ENCODE measurements at regions of chr16 and their contacts with region 1.

Region 1: DNA sequence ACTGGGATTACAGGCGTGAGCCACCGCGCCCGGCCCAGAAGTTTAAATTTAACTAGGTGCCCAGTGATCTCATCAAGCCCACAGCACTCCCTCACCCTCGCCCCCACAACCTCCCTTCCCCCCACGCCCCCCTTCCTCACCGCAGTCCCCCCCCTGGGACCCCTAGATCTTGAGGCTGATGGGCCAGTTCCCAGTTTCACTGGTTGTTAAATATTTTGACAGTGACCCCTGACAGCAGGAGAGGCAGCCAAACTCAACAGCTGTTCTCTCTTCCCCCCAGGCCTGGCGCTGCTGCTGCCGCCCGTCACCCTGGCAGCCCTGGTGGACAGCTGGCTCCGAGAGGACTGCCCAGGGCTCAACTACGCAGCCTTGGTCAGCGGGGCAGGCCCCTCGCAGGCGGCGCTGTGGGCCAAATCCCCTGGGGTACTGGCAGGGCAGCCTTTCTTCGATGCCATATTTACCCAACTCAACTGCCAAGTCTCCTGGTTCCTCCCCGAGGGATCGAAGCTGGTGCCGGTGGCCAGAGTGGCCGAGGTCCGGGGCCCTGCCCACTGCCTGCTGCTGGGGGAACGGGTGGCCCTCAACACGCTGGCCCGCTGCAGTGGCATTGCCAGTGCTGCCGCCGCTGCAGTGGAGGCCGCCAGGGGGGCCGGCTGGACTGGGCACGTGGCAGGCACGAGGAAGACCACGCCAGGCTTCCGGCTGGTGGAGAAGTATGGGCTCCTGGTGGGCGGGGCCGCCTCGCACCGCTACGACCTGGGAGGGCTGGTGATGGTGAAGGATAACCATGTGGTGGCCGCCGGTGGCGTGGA is 15.6 kb downstream of the QPRT start:
- DNase-seq: no peak
- ATAC-seq: no peak
- H3K4me3 ChIP-seq: no peak overlapping the region
- H3K4me3 Mint-ChIP-seq: no peak overlapping the region
- H3K27ac ChIP-seq: no peak overlapping the region
- H3K27ac Mint-ChIP-seq: no peak overlapping the region
- H3K4me1 ChIP-seq: peaks cover 0 to 9% of the 10 kb centered on the region in 2 donors
- H3K4me1 Mint-ChIP-seq: peaks cover 11% of the 10 kb centered on the region
- H3K27me3 ChIP-seq: no peaks in the 10 kb centered on the region
- H3K27me3 Mint-ChIP-seq: no peaks in the 10 kb centered on the region
- CTCF ChIP-seq: no peak

Region 2: GRCh38 chr16:28585674-28586073 is 1108.9 kb before region 1 on chr16:
- CTCF ChIA-PET with region 1: no interaction called
- POLR2A ChIA-PET with region 1: no interaction called
- intact Hi-C with region 1: no loop called
- DNase-seq: no peak
- ATAC-seq: no peak
- H3K4me3 ChIP-seq: no peak overlapping the region
- H3K4me3 Mint-ChIP-seq: no peak overlapping the region
- H3K27ac ChIP-seq: no peak overlapping the region
- H3K27ac Mint-ChIP-seq: no peak overlapping the region
- H3K4me1 ChIP-seq: no peaks in the 10 kb centered on the region
- H3K4me1 Mint-ChIP-seq: no peaks in the 10 kb centered on the region
- H3K27me3 ChIP-seq: no peaks in the 10 kb centered on the region
- H3K27me3 Mint-ChIP-seq: no peaks in the 10 kb centered on the region
- CTCF ChIP-seq: no peak

Region 3: GRCh38 chr16:28974437-28975157 is 720.0 kb before region 1 on chr16 and contains the start of gene SPNS1:
- CTCF ChIA-PET with region 1: no interaction called
- POLR2A ChIA-PET with region 1: no interaction called
- intact Hi-C with region 1: no loop called
- DNase-seq: peak; percentile 96
- ATAC-seq: peak; percentile 89
- H3K4me3 ChIP-seq: peak within 1 kb of the TSS; percentile 75 to 95 (median 83)
- H3K4me3 Mint-ChIP-seq: peak within 1 kb of the TSS; percentile 96
- H3K27ac ChIP-seq: peak within 1 kb of the TSS; percentile 65 to 90
- H3K27ac Mint-ChIP-seq: peak within 1 kb of the TSS; percentile 95
- H3K4me1 ChIP-seq: peaks cover 13 to 17% of the 10 kb centered on the region in 2 donors
- H3K4me1 Mint-ChIP-seq: peaks cover 30% of the 10 kb centered on the region
- H3K27me3 ChIP-seq: no peaks in the 10 kb centered on the region
- H3K27me3 Mint-ChIP-seq: no peaks in the 10 kb centered on the region
- CTCF ChIP-seq: no peak
- total RNA-seq, gene SPNS1: 36.4 and 37.8 TPM in 2 replicates

Region 4: DNA sequence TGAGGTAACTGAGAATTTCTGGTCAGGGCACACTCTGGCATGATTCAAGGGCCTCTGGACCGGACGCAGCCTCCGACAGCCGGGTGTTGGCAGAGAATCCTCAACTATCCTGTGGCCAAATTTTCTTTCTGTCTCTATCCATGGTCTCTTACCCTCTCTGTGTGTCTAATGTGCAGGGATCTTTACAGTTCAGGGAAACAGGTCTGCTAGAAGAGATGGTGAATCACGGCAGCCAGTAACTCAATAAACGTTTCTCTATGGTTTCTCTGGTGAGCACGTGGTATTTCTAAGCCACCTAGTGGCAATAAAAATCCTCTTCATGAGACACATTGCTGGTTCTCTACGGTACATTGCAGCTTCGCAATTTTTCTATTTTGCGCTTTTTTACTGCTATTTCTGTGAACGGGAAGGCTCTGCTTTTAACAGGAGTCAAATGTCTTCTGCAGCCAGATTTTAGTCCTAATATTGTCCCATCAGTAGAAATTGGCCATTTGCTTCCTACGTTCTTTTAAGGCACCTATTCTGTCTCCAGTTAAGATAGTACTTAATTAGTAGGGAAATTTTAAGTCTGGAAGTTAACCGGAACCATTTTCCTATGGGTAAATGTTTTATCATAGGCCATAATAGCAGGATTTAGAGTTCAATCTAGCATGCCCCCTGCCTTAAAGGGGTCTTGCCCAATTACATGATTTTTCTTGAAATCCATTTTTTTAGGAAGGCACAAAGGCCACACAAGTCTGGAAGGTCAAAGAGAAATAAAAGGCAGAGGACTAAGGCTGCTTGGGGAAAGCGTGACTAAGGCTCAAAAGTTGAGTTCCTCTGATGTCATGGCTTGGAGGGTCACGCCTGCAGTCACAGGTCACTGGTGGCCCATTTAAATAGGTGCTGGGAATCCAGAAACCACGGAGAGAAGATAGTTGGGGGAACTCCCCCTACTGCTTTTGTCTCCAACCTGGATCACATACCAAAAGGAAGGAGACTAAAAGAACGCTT is 15.9 kb after region 1 on chr16:
- CTCF ChIA-PET with region 1: interaction called, 60 read pairs
- POLR2A ChIA-PET with region 1: no interaction called
- intact Hi-C with region 1: loop called (anchors 1 kb)
- DNase-seq: peak; percentile 77
- ATAC-seq: peak; percentile 88
- H3K4me3 ChIP-seq: peak overlapping the region in 1 of 5 experiments; percentile 29
- H3K4me3 Mint-ChIP-seq: peak overlapping the region; percentile 17
- H3K27ac ChIP-seq: no peak overlapping the region
- H3K27ac Mint-ChIP-seq: no peak overlapping the region
- H3K4me1 ChIP-seq: peaks cover 19 to 21% of the 10 kb centered on the region in 2 donors
- H3K4me1 Mint-ChIP-seq: peaks cover 20% of the 10 kb centered on the region
- H3K27me3 ChIP-seq: no peaks in the 10 kb centered on the region
- H3K27me3 Mint-ChIP-seq: peaks cover 8% of the 10 kb centered on the region
- CTCF ChIP-seq: peak; percentile 76

Region 5: DNA sequence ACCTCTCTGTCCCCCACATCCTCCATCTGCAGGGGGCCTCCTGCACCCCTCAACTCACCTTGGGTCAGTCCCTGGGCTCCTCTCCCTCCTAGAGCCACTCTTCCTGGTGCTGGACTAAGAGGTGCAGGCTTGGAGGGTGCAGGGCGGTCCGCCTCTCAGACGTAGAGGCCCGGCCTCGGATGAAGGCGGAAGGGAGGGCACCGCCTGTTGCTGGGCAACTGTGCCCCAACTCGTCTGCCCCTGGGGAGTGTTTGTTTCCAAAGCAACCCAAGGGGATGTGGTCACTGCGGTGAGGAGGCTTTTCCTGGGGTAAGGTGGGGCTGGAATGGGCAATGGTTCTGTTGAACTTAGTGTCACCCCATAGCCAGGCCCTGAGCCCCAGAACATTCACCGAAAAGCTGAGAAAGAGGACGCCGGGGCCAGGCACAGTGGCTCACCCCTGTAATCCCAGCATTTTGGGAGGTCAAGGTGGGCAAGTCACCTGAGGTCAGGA is 51.3 kb after region 1 on chr16 and contains the start of gene C16orf54:
- CTCF ChIA-PET with region 1: no interaction called
- POLR2A ChIA-PET with region 1: no interaction called
- intact Hi-C with region 1: no loop called
- DNase-seq: peak; percentile 93
- ATAC-seq: peak; percentile 90
- H3K4me3 ChIP-seq: peak within 1 kb of the TSS; percentile 91 to 100 (median 97)
- H3K4me3 Mint-ChIP-seq: peak within 1 kb of the TSS; percentile 99
- H3K27ac ChIP-seq: peak within 1 kb of the TSS; percentile 95
- H3K27ac Mint-ChIP-seq: peak within 1 kb of the TSS; percentile 99
- H3K4me1 ChIP-seq: peaks cover 44 to 59% of the 10 kb centered on the region in 2 donors
- H3K4me1 Mint-ChIP-seq: peaks cover 64% of the 10 kb centered on the region
- H3K27me3 ChIP-seq: no peaks in the 10 kb centered on the region
- H3K27me3 Mint-ChIP-seq: no peaks in the 10 kb centered on the region
- CTCF ChIP-seq: no peak
- total RNA-seq, gene C16orf54: 64.4 and 68.3 TPM in 2 replicates

Region 6: DNA sequence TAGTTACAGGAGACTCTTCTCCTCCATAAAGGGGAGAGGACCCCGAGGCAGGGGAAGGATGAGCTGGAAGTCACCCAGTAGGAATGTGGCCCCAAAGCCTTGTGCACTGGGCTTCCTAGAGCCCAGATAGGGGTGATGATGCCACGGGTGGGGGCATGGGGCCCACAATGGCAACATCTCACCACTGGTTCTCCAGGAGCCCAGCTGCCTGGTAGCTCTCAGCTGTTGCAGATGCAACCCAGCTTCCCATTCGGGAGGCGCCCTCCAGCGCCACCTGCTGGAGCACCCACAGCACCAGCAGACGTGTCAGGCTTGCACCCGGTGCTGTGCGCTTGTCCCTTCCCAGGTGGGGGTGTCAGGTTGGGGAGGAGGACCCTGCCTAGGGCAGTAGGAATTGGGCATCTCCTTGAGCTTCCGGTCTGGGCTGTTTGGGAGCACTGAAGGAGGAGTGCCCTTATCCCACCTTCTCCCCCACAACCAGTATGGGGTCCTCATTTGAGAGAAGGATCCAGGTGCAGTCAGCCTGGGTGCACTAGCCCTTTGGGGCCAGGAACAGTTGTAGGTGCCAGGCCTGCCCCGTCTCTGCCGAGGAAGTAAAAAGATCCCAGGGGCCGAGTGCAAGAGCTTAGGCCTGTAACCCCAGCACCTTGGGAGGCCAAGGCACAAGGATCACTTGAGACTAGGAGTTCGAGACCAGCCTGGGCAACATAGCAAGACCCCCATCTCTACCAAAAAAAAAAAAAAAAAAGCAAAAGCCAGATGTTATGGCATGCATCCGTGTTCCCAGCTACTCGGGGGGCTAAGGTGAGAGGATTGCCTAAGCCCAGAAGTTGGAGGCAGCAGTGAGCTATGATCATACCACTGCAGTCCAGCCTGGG is 154.1 kb after region 1 on chr16:
- CTCF ChIA-PET with region 1: interaction called, 100 read pairs
- POLR2A ChIA-PET with region 1: no interaction called
- intact Hi-C with region 1: loop called (anchors 1 kb)
- DNase-seq: peak; percentile 75
- ATAC-seq: peak; percentile 79
- H3K4me3 ChIP-seq: no peak overlapping the region
- H3K4me3 Mint-ChIP-seq: no peak overlapping the region
- H3K27ac ChIP-seq: no peak overlapping the region
- H3K27ac Mint-ChIP-seq: no peak overlapping the region
- H3K4me1 ChIP-seq: no peaks in the 10 kb centered on the region
- H3K4me1 Mint-ChIP-seq: no peaks in the 10 kb centered on the region
- H3K27me3 ChIP-seq: no peaks in the 10 kb centered on the region
- H3K27me3 Mint-ChIP-seq: no peaks in the 10 kb centered on the region
- CTCF ChIP-seq: peak; percentile 78

Region 7: GRCh38 chr16:29900102-29900887 is 205.7 kb after region 1 on chr16 and contains the start of gene ASPHD1:
- CTCF ChIA-PET with region 1: no interaction called
- POLR2A ChIA-PET with region 1: no interaction called
- intact Hi-C with region 1: loop called (anchors 10 kb)
- DNase-seq: peak; percentile 83
- ATAC-seq: peak; percentile 83
- H3K4me3 ChIP-seq: peak within 1 kb of the TSS in 4 of 5 experiments; percentile 29 to 62 (median 50)
- H3K4me3 Mint-ChIP-seq: peak within 1 kb of the TSS; percentile 62
- H3K27ac ChIP-seq: no peak within 1 kb of the TSS
- H3K27ac Mint-ChIP-seq: no peak within 1 kb of the TSS
- H3K4me1 ChIP-seq: peaks cover 15 to 22% of the 10 kb centered on the region in 2 donors
- H3K4me1 Mint-ChIP-seq: peaks cover 3% of the 10 kb centered on the region
- H3K27me3 ChIP-seq: peaks cover 0 to 48% (median 25%) of the 10 kb centered on the region in 4 experiments
- H3K27me3 Mint-ChIP-seq: peaks cover 32% of the 10 kb centered on the region
- CTCF ChIP-seq: no peak
- total RNA-seq, gene ASPHD1: not detected in 2 replicates

Region 8: DNA sequence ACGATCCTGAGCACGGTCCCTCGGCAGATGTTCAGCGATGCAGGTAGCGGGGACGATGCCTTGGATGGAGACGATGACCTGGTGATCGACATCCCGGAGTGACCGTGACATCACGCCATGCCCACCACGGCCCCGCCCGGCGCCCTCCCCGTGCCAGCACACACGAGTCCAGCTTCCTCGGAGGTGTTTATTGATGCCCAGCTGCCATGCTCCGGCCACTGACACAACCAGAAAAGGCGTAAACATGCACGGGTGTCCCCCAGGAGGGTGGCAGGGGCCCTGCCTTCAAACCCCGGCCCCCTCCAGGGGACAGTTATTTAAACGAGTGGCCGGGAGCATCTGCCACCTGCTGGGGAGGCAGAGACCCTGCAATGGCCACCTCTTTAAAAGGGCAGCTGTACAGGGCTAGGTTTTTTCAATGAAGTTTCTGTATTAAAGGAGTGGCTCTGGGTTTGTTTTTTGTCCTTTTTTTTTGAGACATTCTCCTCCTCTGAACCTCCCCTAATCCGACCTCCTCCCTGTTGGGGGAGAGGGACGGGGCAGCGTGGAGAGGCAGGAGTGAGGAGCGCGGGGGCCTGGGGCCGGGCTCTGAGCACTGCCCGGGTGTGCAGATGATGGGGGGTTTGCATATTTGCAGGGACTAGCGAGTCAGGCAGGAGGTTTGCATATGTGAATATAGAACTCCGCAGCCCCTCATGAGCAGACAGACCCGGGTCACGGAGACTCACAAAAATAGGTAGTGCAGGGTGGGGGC is 310.9 kb after region 1 on chr16:
- CTCF ChIA-PET with region 1: interaction called, 17 read pairs
- POLR2A ChIA-PET with region 1: no interaction called
- intact Hi-C with region 1: loop called (anchors 1 kb)
- DNase-seq: peak; percentile 62
- ATAC-seq: peak; percentile 74
- H3K4me3 ChIP-seq: no peak overlapping the region
- H3K4me3 Mint-ChIP-seq: no peak overlapping the region
- H3K27ac ChIP-seq: no peak overlapping the region
- H3K27ac Mint-ChIP-seq: no peak overlapping the region
- H3K4me1 ChIP-seq: peaks cover 10 to 19% of the 10 kb centered on the region in 2 donors
- H3K4me1 Mint-ChIP-seq: peaks cover 10% of the 10 kb centered on the region
- H3K27me3 ChIP-seq: peaks cover 0 to 14% (median 4%) of the 10 kb centered on the region in 4 experiments
- H3K27me3 Mint-ChIP-seq: peaks cover 12% of the 10 kb centered on the region
- CTCF ChIP-seq: peak; percentile 80

Region 9: GRCh38 chr16:30018731-30019158 is 324.2 kb after region 1 on chr16:
- CTCF ChIA-PET with region 1: interaction called, 8 read pairs
- POLR2A ChIA-PET with region 1: no interaction called
- intact Hi-C with region 1: loop called (anchors 1 kb)
- DNase-seq: no peak
- ATAC-seq: no peak
- H3K4me3 ChIP-seq: no peak overlapping the region
- H3K4me3 Mint-ChIP-seq: no peak overlapping the region
- H3K27ac ChIP-seq: no peak overlapping the region
- H3K27ac Mint-ChIP-seq: no peak overlapping the region
- H3K4me1 ChIP-seq: peaks cover 6 to 11% of the 10 kb centered on the region in 2 donors
- H3K4me1 Mint-ChIP-seq: peaks cover 15% of the 10 kb centered on the region
- H3K27me3 ChIP-seq: no peaks in the 10 kb centered on the region
- H3K27me3 Mint-ChIP-seq: peaks cover 4% of the 10 kb centered on the region
- CTCF ChIP-seq: no peak

Measured in B cell (primary cell).